Transverse colon (tissue), 4 donors: ENCODE measurements at regions of chr9 and their contacts with region 1.

Region 1: DNA sequence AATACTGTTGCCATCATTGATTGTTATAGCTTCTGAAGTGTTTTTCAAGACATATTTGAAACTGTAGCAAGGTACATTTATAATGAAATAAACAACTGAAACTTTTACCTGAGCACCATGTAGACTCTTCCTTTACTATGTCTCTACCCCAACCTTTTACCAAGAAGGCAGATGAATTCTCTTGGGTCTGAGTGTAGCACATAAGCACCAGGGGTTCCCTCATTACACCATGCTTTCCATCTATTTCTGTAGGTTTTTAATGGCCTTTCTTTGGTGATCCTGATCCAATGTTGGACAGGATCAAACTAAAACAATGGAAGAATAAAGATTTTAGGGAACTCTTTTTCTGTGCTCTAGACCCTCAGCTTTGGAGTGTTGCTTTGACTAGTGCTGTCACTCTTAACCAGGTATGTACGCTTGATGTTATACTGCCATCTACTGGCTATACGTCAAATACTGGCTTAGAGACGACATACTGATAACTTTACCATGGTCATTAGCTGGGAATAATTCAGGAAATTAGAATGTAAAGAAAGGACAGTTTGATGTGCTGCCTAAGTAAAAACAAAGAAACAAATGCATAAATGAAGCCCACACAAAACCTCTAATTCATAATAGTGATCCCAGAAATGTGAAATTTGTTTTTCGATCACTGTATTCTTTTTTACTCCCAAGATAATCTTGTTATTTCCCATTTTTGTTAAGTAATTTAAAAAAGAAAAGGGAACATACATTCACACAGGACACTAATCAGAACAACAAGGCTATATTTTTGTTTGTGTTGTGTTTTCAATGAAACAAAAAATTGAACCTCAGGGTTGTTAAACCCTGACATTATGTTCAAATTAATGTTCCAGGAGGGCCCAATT is 30.7 kb downstream of the IFNW1 start:
- DNase-seq: no peak
- H3K4me3 ChIP-seq: no peak overlapping the region
- H3K27ac ChIP-seq: no peak overlapping the region
- H3K4me1 ChIP-seq: no peaks in the 10 kb centered on the region
- H3K27me3 ChIP-seq: no peaks in the 10 kb centered on the region
- CTCF ChIP-seq: peak; percentile 65 to 81 (median 76)
- EP300 ChIP-seq: no peak
- POLR2A ChIP-seq: no peak

Region 2: GRCh38 chr9:19493174-19493811 is 1617.6 kb before region 1 on chr9:
- in situ Hi-C with region 1: loop called in 2 of 4 experiments (anchors 25 kb)
- intact Hi-C with region 1: no loop called
- DNase-seq: peak; percentile 24
- H3K4me3 ChIP-seq: peak overlapping the region in 1 of 4 donors; percentile 20
- H3K27ac ChIP-seq: peak overlapping the region in 3 of 4 donors; percentile 34 to 47 (median 37)
- H3K4me1 ChIP-seq: peaks cover 0 to 3% (median 0%) of the 10 kb centered on the region in 4 donors
- H3K27me3 ChIP-seq: no peaks in the 10 kb centered on the region
- CTCF ChIP-seq: peak; percentile 53 to 70 (median 63)
- EP300 ChIP-seq: no peak
- POLR2A ChIP-seq: no peak

Region 3: DNA sequence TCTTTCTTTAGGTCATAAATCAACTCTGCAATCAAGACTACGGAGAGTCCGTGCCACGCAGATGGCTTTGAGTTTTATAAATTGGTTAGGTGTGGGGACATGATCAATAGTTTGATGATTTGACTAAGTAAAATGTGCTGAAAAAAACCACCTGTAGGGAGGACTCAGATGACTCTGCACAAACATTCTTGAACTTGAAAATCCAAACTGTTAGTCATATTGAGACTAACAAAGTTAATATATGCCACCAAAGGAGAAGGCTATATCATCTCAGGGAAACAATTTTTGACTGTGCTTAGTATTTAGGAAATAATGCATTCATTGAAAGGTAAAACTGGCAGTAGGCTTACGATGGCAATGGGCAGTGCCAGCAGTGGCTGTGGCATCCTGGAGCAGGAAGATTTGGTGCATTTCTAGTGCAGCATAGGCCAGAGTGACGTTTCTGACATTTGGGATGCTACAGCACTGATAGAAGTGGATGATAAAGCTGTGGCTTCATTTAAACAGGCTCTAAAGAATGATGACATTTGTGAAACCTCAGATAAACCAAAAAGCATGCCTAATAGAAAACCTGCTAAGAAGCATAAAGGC is 779.8 kb before region 1 on chr9:
- in situ Hi-C with region 1: loop called in 1 of 4 experiments (anchors 25 kb)
- intact Hi-C with region 1: no loop called
- DNase-seq: no peak
- H3K4me3 ChIP-seq: no peak overlapping the region
- H3K27ac ChIP-seq: no peak overlapping the region
- H3K4me1 ChIP-seq: no peaks in the 10 kb centered on the region
- H3K27me3 ChIP-seq: no peaks in the 10 kb centered on the region
- CTCF ChIP-seq: no peak
- EP300 ChIP-seq: no peak
- POLR2A ChIP-seq: no peak

Region 4: DNA sequence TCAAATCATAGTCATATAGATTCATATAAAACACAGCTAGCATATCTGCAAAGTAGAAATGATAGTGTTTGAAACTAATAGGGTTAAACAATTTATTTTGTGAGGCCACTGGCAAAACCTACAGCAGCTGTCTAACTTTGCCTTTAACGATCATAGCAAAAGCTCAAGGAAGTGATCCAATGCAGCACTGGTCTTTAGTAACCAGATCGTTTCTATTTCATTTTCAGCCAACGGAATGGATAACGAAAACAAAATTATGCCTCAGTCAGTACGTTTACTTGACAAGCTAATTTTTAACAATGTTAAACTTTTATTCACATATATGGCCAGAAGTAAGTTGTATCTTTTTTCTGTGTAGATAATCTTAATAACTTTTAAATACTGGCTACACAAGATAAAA is 506.4 kb before region 1 on chr9:
- in situ Hi-C with region 1: no loop called
- intact Hi-C with region 1: no loop called
- DNase-seq: no peak
- H3K4me3 ChIP-seq: peak overlapping the region in 1 of 4 donors; percentile 32
- H3K27ac ChIP-seq: peak overlapping the region; percentile 37 to 67 (median 53)
- H3K4me1 ChIP-seq: peaks cover 22 to 67% (median 51%) of the 10 kb centered on the region in 4 donors
- H3K27me3 ChIP-seq: no peaks in the 10 kb centered on the region
- CTCF ChIP-seq: no peak
- EP300 ChIP-seq: no peak
- POLR2A ChIP-seq: no peak

Region 5: GRCh38 chr9:20884985-20885593 is 225.9 kb before region 1 on chr9:
- in situ Hi-C with region 1: loop called (anchors 10 to 25 kb)
- intact Hi-C with region 1: no loop called
- DNase-seq: peak; percentile 61
- H3K4me3 ChIP-seq: no peak overlapping the region
- H3K27ac ChIP-seq: no peak overlapping the region
- H3K4me1 ChIP-seq: no peaks in the 10 kb centered on the region
- H3K27me3 ChIP-seq: no peaks in the 10 kb centered on the region
- CTCF ChIP-seq: peak; percentile 51 to 74 (median 59)
- EP300 ChIP-seq: no peak
- POLR2A ChIP-seq: no peak